ENCODE measurements at regions of chr16 and their contacts with region 1.

Region 1: GRCh38 chr16:50210266-50211038 is 55.9 kb upstream of the ADCY7 start:
- DNase-seq: peak; percentile 50
- H3K4me3 Mint-ChIP-seq: no peak overlapping the region
- H3K27ac Mint-ChIP-seq: no peak overlapping the region
- H3K4me1 Mint-ChIP-seq: peaks cover 21% of the 10 kb centered on the region
- H3K27me3 Mint-ChIP-seq: no peaks in the 10 kb centered on the region

Region 2: DNA sequence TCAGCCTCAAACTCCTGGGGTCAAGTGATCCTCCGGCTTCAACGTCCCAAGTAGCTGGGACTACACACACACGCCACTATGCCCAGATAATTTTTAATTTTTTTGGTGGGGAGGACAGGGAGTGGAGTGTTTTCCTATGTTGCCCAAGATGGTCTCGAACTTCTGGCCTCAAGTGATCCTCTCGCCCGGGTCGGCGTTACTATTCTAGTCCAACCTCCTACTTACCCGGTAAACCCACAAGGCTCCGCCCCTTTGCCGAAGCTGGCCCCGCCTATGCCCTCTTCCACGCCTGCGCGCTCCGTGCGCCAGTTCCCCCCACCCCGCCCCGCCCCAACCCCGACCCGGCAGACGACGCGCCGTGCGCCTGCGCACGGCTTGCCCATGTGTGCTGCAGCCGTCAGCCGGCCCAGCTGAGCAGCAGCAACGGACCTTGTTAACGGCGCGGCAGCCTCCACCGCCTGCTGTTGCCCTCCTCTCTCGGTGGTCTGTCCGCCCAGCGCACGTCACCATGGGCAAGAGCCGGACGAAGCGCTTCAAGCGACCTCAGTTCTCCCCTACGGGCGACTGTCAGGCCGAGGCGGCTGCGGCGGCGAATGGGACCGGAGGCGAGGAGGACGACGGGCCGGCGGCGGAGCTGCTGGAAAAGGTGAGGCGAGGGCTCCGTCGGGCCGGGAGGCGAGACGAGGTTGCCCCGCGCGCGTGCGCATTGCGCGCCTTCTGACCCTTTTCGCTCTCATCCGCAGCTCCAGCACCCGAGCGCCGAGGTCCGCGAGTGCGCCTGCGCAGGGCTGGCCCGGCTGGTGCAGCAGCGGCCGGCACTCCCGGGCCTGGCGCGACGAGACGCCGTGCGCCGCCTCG is 144.6 kb before region 1 on chr16 and contains the start of gene HEATR3:
- intact Hi-C with region 1: loop called (anchors 1 kb)
- DNase-seq: peak; percentile 94
- H3K4me3 Mint-ChIP-seq: peak within 1 kb of the TSS; percentile 87
- H3K27ac Mint-ChIP-seq: peak within 1 kb of the TSS; percentile 92
- H3K4me1 Mint-ChIP-seq: peaks cover 32% of the 10 kb centered on the region
- H3K27me3 Mint-ChIP-seq: no peaks in the 10 kb centered on the region
- total RNA-seq, gene HEATR3: 24.9 and 25.9 TPM in 2 replicates

Region 3: DNA sequence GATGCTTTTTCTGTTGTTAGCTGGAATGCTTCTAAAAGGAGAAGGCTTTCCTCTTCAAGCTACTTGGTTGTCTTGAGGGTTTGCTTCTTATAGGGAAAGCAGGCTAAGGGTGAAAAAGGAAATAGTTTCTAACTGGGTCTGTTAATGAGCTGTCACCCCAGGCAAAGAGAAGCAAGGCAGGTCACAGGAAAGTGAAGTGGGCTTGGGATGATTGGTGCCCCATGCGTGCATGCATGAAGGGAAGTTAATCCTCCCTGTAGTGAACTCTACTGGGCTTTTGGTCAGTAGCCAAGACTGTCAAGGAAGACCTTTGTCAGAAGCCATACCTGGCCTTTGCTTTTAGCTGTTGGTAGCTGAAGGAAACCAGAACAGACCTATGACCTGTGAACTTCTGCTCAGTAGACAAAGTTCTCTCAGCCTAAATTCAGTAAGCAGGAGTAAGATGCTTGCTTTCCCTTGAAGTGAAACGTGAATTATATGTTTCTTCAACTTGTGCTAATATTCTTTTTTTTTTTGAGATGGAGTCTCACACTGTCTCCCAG is 40.8 kb before region 1 on chr16:
- intact Hi-C with region 1: no loop called
- DNase-seq: no peak
- H3K4me3 Mint-ChIP-seq: no peak overlapping the region
- H3K27ac Mint-ChIP-seq: no peak overlapping the region
- H3K4me1 Mint-ChIP-seq: peaks cover 53% of the 10 kb centered on the region
- H3K27me3 Mint-ChIP-seq: no peaks in the 10 kb centered on the region

Region 4: GRCh38 chr16:50326949-50327402 is 116.5 kb after region 1 on chr16:
- intact Hi-C with region 1: loop called (anchors 10 kb)
- DNase-seq: peak; percentile 61
- H3K4me3 Mint-ChIP-seq: no peak overlapping the region
- H3K27ac Mint-ChIP-seq: peak overlapping the region; percentile 70
- H3K4me1 Mint-ChIP-seq: peaks cover 37% of the 10 kb centered on the region
- H3K27me3 Mint-ChIP-seq: no peaks in the 10 kb centered on the region

Region 5: GRCh38 chr16:50665128-50665878 is 454.9 kb after region 1 on chr16:
- intact Hi-C with region 1: loop called (anchors 2 kb)
- DNase-seq: peak; percentile 74
- H3K4me3 Mint-ChIP-seq: peak overlapping the region; percentile 55
- H3K27ac Mint-ChIP-seq: peak overlapping the region; percentile 17
- H3K4me1 Mint-ChIP-seq: peaks cover 34% of the 10 kb centered on the region
- H3K27me3 Mint-ChIP-seq: no peaks in the 10 kb centered on the region